HCT116 (cell line): ENCODE measurements at regions of chr7 and their contacts with region 1.

Region 1: GRCh38 chr7:8436965-8437364 is 3.6 kb downstream of the NXPH1 start:
- DNase-seq: peak; percentile 50
- ATAC-seq: peak; percentile 99
- H3K4me3 ChIP-seq: peak overlapping the region; percentile 34 to 38; a peak in 3 of 4 replicates
- H3K27ac ChIP-seq: no peak overlapping the region
- H3K4me1 ChIP-seq: no peaks in the 10 kb centered on the region; a peak in 1 of 4 replicates
- H3K27me3 ChIP-seq: peaks cover 5% of the 10 kb centered on the region; the same call in 1 of the 2 replicates
- CTCF ChIP-seq: peak; percentile 71 to 96 (median 95)
- POLR2A ChIP-seq: no peak
- RAD21 ChIP-seq: peak; percentile 89

Region 2: GRCh38 chr7:8290645-8291314 is 146.2 kb before region 1 on chr7:
- CTCF ChIA-PET with region 1: no interaction called
- POLR2A ChIA-PET with region 1: no interaction called
- RAD21 ChIA-PET with region 1: no interaction called
- intact Hi-C with region 1: no loop called
- DNase-seq: no peak
- ATAC-seq: no peak
- H3K4me3 ChIP-seq: no peak overlapping the region
- H3K27ac ChIP-seq: no peak overlapping the region
- H3K4me1 ChIP-seq: no peaks in the 10 kb centered on the region
- H3K27me3 ChIP-seq: no peaks in the 10 kb centered on the region
- CTCF ChIP-seq: no peak
- POLR2A ChIP-seq: no peak
- RAD21 ChIP-seq: no peak

Region 3: GRCh38 chr7:8724080-8724718 is 287.2 kb after region 1 on chr7:
- CTCF ChIA-PET with region 1: interaction called, 6 read pairs
- POLR2A ChIA-PET with region 1: no interaction called
- RAD21 ChIA-PET with region 1: no interaction called
- intact Hi-C with region 1: loop called (anchors 1 kb)
- DNase-seq: no peak
- ATAC-seq: peak; percentile 78
- H3K4me3 ChIP-seq: no peak overlapping the region
- H3K27ac ChIP-seq: no peak overlapping the region
- H3K4me1 ChIP-seq: no peaks in the 10 kb centered on the region
- H3K27me3 ChIP-seq: no peaks in the 10 kb centered on the region
- CTCF ChIP-seq: peak; percentile 37 to 76 (median 71); a peak in 5 of 6 replicates
- POLR2A ChIP-seq: no peak
- RAD21 ChIP-seq: peak; percentile 53

Region 4: DNA sequence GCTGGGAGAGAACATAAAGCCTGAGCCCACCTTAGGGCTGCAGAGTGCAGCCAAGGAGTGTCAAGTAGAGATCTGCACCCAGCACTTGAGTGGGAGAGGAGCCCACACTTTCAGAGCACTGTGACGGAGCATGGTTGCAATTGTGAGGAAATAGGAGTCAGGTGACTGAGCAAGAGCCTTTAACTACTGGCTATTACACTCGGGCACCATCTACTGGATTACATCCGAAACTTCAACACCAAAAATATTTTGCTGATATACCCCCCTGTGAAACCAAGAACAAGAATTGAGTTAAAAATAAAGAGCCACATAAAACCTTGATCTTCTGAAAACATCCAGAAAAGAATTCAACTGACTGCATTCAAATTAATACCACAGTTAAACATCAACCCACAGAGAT is 654.3 kb after region 1 on chr7:
- CTCF ChIA-PET with region 1: no interaction called
- POLR2A ChIA-PET with region 1: no interaction called
- RAD21 ChIA-PET with region 1: no interaction called
- intact Hi-C with region 1: loop called (anchors 5 kb)
- DNase-seq: no peak
- ATAC-seq: no peak
- H3K4me3 ChIP-seq: no peak overlapping the region
- H3K27ac ChIP-seq: no peak overlapping the region
- H3K4me1 ChIP-seq: no peaks in the 10 kb centered on the region
- H3K27me3 ChIP-seq: no peaks in the 10 kb centered on the region
- CTCF ChIP-seq: peak in 2 of 3 experiments; percentile 31 to 38; a peak in 3 of 6 replicates
- POLR2A ChIP-seq: no peak
- RAD21 ChIP-seq: 0 out of 2 replicates have a peak, but pooled peaks have one; percentile 27

Region 5: GRCh38 chr7:10412422-10413019 is 1975.6 kb after region 1 on chr7:
- CTCF ChIA-PET with region 1: no interaction called
- POLR2A ChIA-PET with region 1: no interaction called
- RAD21 ChIA-PET with region 1: no interaction called
- intact Hi-C with region 1: loop called (anchors 1 kb)
- DNase-seq: peak; percentile 16
- ATAC-seq: peak; percentile 54; the same call in 1 of the 2 replicates
- H3K4me3 ChIP-seq: no peak overlapping the region
- H3K27ac ChIP-seq: no peak overlapping the region
- H3K4me1 ChIP-seq: no peaks in the 10 kb centered on the region
- H3K27me3 ChIP-seq: no peaks in the 10 kb centered on the region
- CTCF ChIP-seq: peak; percentile 20 to 54 (median 51); a peak in 4 of 6 replicates
- POLR2A ChIP-seq: no peak
- RAD21 ChIP-seq: peak; percentile 53